RWPE1 (cell line): ENCODE measurements at regions of chr12 and their contacts with region 1.

Region 1: GRCh38 chr12:120012067-120012621 is 23.1 kb downstream of the BICDL1 start:
- DNase-seq: peak; percentile 29
- H3K27ac ChIP-seq: no peak overlapping the region
- CTCF ChIP-seq: no peak

Region 2: DNA sequence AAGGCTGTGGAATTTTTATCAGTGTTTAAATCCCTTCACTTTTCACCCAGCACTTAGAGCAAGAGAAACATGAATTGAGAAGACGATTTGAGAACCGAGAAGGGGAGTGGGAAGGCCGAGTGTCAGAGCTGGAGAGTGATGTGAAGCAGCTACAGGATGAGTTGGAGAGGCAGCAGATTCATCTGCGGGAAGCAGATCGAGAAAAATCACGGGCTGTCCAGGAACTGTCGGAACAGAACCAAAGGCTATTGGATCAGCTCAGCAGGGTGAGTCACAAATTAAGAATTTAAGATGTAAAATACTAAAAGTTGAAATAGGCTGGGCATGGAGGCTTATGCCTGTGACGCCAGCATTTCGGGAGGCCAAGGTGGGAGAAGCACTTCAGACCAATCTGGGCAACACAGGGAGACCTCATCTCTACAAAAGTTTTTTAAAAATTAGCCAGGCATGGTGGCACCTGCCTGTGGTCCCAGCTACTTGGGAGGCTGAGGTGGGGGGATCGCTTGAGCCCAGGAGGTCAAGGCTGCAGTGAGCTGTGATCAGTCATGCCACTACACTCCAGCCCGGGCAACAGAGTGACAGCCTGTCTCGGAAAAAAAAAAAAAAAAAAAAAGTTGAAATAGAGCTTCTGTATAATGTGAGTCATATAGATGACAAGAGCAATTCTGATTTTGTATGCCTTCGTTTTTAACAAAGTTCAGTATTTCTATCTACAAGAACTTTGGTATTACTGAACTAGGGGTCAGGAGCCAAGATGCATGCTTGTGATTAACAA is 13.5 kb before region 1 on chr12:
- CTCF ChIA-PET with region 1: no interaction called
- POLR2A ChIA-PET with region 1: interaction called, 10 read pairs
- DNase-seq: no peak
- H3K27ac ChIP-seq: no peak overlapping the region; the same call in 1 of the 2 replicates
- CTCF ChIP-seq: no peak

Region 3: DNA sequence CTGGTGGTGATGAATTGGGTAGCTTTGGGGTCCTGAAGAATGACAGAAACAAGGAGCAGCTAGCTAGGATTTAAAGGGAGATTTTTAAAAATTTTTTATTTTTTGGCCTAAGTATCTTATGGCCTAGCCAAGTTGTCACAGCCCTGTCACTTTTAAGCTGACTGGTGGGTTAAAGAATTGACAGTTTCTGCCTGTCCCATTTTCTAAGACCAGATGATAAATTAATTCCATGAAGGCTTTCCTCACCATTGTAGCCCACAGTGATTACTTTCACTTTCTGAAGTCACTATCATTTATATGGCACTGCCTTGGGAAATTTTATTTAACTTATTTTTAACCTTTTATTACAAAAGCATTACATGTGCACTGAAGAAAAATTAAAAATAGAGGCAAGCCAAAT is 20.1 kb after region 1 on chr12:
- CTCF ChIA-PET with region 1: no interaction called
- POLR2A ChIA-PET with region 1: no interaction called
- DNase-seq: no peak
- H3K27ac ChIP-seq: no peak overlapping the region
- CTCF ChIP-seq: no peak